Panc1 (cell line): ENCODE measurements at regions of chr11 and their contacts with region 1.

Region 1: DNA sequence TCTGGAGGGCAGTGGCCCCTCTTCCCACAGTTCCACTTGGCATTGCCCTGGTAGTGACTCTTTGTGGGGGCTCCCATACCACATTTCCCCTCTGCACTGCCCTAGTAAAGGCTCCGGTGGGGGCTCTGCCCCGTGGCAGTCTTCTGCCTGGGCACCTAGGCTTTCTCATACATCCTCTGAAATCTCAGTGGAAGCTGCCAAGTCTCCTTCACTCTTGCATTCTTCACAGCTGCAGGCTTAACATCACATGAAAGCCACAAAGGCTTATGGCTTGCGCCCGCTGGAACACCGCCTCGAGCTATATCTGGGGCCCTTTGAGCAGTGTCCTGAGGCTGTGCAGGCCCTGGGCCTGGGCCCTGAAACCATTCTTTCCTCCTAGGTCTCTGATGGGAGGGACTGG is 25.3 kb downstream of the PLEKHB1 start:
- DNase-seq: no peak
- ATAC-seq: peak; percentile 47
- H3K4me3 ChIP-seq: no peak overlapping the region
- H3K27ac ChIP-seq: no peak overlapping the region
- H3K4me1 ChIP-seq: no peaks in the 10 kb centered on the region
- H3K27me3 ChIP-seq: no peaks in the 10 kb centered on the region
- CTCF ChIP-seq: no peak

Region 2: GRCh38 chr11:73889019-73889418 is 217.3 kb after region 1 on chr11:
- CTCF ChIA-PET with region 1: interaction called, 13 read pairs
- POLR2A ChIA-PET with region 1: no interaction called
- in situ Hi-C with region 1: no loop called
- intact Hi-C with region 1: no loop called
- DNase-seq: no peak
- ATAC-seq: no peak
- H3K4me3 ChIP-seq: no peak overlapping the region
- H3K27ac ChIP-seq: no peak overlapping the region
- H3K4me1 ChIP-seq: no peaks in the 10 kb centered on the region
- H3K27me3 ChIP-seq: no peaks in the 10 kb centered on the region
- CTCF ChIP-seq: no peak